Common myeloid progenitor, CD34-positive (primary cell): ENCODE measurements at regions of chr1 and their contacts with region 1.

Region 1: DNA sequence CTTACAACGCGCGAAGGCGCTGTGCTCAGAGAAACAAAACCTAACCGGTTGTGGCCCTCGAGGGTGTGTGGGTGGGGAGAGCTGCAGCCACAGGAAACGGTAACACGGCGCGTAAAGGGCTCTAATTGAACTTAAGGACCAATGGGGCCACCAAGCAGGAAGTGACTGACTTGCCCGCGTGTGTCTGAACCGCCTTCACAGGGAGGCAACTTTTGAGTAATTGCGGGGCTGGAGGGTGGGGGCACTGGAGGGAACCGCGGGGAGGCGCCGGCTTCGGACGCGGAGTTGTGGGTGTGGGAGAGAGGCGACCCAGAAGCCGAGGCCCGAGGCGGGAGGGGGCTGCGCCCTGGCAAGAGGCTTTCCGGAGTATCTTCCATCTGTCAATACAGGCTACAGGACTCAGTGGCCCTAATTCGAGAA is 577 bp upstream of the PNRC2 start:
- DNase-seq: peak; percentile 98 to 100 (median 99)
- H3K4me3 ChIP-seq: peak overlapping the region; percentile 57 to 100 (median 91)
- H3K27ac ChIP-seq: peak overlapping the region; percentile 98 to 100
- H3K4me1 ChIP-seq: peaks cover 21 to 65% (median 50%) of the 10 kb centered on the region in 4 experiments
- H3K27me3 ChIP-seq: no peaks in the 10 kb centered on the region

Region 2: GRCh38 chr1:24003331-24003972 is 44.4 kb after region 1 on chr1:
- CTCF ChIA-PET with region 1: no interaction called
- POLR2A ChIA-PET with region 1: no interaction called
- DNase-seq: peak in 1 of 3 donors; percentile 3
- H3K4me3 ChIP-seq: no peak overlapping the region
- H3K27ac ChIP-seq: no peak overlapping the region
- H3K4me1 ChIP-seq: no peaks in the 10 kb centered on the region
- H3K27me3 ChIP-seq: no peaks in the 10 kb centered on the region

Region 3: DNA sequence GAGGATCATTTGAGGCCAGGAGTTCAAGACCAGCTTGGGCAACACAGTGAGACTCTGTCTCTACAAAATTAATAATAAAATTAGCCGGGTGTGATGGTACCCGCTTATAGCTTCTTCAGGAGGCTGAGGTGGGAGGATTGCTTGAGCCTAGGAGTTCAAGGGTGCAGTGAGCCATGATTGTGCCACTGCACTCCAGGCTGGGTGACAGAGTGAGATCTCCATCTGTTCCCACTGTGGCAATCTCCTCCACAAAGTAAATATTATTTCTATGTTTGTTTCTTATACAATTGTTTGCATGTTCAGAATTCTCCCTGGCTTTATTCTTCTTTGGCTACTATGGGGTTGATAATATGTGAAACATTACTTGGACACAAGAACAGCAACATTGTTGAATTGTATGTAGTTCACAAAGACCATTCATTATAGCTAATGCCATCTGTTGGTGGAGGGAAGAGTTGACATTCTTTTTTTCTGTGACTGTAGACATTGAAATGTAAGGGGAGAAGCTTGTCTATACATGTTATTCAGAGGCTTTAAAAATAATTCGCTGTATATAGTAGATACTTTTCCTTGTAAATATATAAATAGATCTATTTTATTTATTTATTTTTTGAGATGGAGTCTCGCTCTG is 68.9 kb after region 1 on chr1:
- CTCF ChIA-PET with region 1: interaction called, 12 read pairs
- POLR2A ChIA-PET with region 1: interaction called, 5 read pairs
- DNase-seq: peak; percentile 38 to 62 (median 52)
- H3K4me3 ChIP-seq: no peak overlapping the region
- H3K27ac ChIP-seq: no peak overlapping the region
- H3K4me1 ChIP-seq: peaks cover 0 to 3% (median 0%) of the 10 kb centered on the region in 4 experiments
- H3K27me3 ChIP-seq: no peaks in the 10 kb centered on the region